ENCODE measurements at regions of chr2 and their contacts with region 1.

Region 1: GRCh38 chr2:64214281-64215115 is 70.3 kb upstream of the PELI1 start:
- DNase-seq: peak; percentile 59
- H3K4me3 Mint-ChIP-seq: peak overlapping the region; percentile 63
- H3K27ac Mint-ChIP-seq: peak overlapping the region; percentile 97
- H3K4me1 Mint-ChIP-seq: peaks cover 56% of the 10 kb centered on the region
- H3K27me3 Mint-ChIP-seq: no peaks in the 10 kb centered on the region

Region 2: GRCh38 chr2:63841254-63842022 is 373.1 kb before region 1 on chr2 and contains the start of gene UGP2:
- CTCF ChIA-PET with region 1: no interaction called
- POLR2A ChIA-PET with region 1: no interaction called
- intact Hi-C with region 1: loop called (anchors 2 kb)
- DNase-seq: peak; percentile 91
- H3K4me3 Mint-ChIP-seq: peak within 1 kb of the TSS; percentile 99
- H3K27ac Mint-ChIP-seq: peak within 1 kb of the TSS; percentile 100
- H3K4me1 Mint-ChIP-seq: peaks cover 44% of the 10 kb centered on the region
- H3K27me3 Mint-ChIP-seq: no peaks in the 10 kb centered on the region
- total RNA-seq, gene UGP2: 113 to 119 TPM

Region 3: DNA sequence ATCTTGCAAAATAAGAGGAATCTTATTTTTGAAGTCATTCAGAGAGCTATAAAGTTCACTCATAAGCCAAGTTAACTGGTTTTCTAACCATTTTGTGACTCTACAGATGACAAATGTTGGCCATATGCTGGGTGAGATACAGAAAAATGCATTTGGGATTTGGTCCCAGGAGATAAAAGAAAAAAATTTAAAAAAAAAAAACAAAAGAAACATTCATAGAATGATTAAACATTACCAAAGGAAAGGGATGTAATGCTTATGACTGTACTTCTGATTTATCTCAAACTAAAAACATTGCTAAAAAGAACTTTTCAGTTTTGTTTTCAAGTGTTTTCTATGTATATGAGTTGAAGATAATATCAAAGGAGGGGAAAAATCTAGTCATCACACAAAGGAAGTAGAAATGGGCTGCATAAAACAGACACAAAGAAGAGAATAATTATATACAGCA is 113.3 kb before region 1 on chr2:
- CTCF ChIA-PET with region 1: interaction called, 4 read pairs
- POLR2A ChIA-PET with region 1: interaction called, 13 read pairs
- intact Hi-C with region 1: loop called (anchors 1 kb)
- DNase-seq: no peak
- H3K4me3 Mint-ChIP-seq: peak overlapping the region; percentile 49
- H3K27ac Mint-ChIP-seq: peak overlapping the region; percentile 78
- H3K4me1 Mint-ChIP-seq: peaks cover 63% of the 10 kb centered on the region
- H3K27me3 Mint-ChIP-seq: no peaks in the 10 kb centered on the region

Region 4: DNA sequence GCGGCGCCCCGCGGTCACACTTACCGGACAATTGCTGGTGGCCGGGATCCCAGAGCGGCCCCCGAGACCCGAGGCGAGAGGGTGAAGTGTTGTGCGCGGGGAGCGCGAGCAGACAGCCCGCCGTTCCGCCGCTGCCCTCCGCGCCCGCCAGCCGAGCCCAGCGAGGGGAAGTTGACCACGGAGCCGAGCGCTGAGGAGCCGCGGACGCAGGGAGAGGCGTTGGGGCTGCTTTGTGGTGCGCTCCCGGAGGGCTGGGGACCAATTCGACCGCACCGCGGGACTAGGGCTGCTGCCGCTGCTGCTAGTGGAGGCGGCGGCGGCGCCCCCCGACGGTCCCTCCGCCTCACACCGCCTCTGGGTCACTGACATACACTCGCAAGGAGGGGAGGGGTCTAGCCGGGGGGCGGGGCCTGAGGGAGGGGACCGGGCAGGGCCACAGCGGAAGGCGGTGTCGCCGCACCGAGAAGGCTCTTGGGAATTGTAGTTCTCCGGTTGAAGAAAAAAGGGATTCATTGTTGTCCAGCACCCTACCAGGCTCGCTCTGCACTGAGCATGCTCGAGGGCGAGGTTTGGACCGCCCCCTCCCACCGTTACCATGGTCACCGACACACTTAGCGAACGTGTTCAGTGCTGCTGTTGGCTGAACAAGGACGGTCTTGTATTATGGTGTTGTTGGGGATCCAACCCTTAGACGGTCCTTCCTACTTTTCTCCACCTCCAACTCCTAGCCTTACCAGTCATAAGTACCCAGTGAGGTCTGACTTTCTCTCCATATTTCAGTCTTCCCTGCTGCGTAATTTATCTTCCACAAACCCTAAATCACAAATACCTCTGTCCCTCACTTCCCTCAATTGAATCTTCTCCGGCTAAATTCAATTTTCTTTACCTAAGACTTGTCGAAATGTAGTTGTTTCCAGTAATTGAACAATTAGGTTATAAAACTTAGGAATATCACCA is 70.2 kb before region 1 on chr2 and contains the start of gene PELI1:
- CTCF ChIA-PET with region 1: interaction called, 8 read pairs
- POLR2A ChIA-PET with region 1: interaction called, 32 read pairs
- intact Hi-C with region 1: loop called (anchors 1 kb)
- DNase-seq: peak; percentile 97
- H3K4me3 Mint-ChIP-seq: peak within 1 kb of the TSS; percentile 96
- H3K27ac Mint-ChIP-seq: peak within 1 kb of the TSS; percentile 97
- H3K4me1 Mint-ChIP-seq: peaks cover 24% of the 10 kb centered on the region
- H3K27me3 Mint-ChIP-seq: no peaks in the 10 kb centered on the region
- total RNA-seq, gene PELI1: 38.4 to 42.9 TPM

Region 5: GRCh38 chr2:64228126-64228678 is 13.7 kb after region 1 on chr2:
- CTCF ChIA-PET with region 1: interaction called, 5 read pairs
- POLR2A ChIA-PET with region 1: interaction called, 16 read pairs
- intact Hi-C with region 1: loop called (anchors 1 kb)
- DNase-seq: peak; percentile 76
- H3K4me3 Mint-ChIP-seq: peak overlapping the region; percentile 88
- H3K27ac Mint-ChIP-seq: peak overlapping the region; percentile 82
- H3K4me1 Mint-ChIP-seq: peaks cover 33% of the 10 kb centered on the region
- H3K27me3 Mint-ChIP-seq: peaks cover 2% of the 10 kb centered on the region

Region 6: DNA sequence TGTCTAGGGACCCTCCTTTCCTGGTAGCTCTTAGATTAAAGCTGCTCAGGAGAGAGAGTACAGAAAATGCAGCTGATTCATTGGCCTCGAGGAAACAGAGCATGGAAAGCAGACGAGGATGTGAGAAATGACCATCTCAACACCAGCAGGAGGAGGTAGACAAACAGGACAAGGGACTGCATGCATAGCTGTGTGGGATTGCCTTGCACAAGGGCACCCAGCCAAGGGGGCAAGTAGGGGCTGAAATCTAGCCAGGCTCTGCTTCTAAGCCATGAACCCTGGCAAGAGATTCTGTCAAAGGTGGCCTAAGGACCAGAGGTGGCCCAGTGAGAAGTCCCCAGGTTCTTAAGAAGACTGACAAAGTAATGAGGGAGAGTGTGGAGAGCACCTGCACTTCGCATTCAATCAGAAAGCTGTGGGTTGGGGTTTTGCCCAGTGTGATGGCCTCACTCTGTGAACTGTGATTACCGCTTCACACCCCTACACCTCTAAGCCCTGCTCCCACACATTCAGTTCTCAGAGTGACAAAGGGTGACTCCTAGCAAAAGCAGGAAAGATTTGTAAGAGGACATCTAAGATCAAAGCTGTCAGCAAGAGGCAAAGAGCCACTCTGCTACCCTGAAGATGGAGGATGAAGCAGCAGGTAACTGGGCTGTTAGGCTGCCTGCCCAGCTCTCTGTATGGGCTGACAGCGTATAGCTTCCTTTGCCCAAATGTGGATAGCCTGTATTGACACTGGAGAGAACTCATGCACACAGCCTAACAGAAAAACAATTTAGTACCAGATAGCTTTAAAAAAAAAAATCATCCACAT is 81.0 kb after region 1 on chr2:
- CTCF ChIA-PET with region 1: interaction called, 10 read pairs
- POLR2A ChIA-PET with region 1: interaction called, 29 read pairs
- intact Hi-C with region 1: loop called (anchors 1 kb)
- DNase-seq: peak; percentile 84
- H3K4me3 Mint-ChIP-seq: no peak overlapping the region
- H3K27ac Mint-ChIP-seq: peak overlapping the region; percentile 26
- H3K4me1 Mint-ChIP-seq: peaks cover 30% of the 10 kb centered on the region
- H3K27me3 Mint-ChIP-seq: peaks cover 2% of the 10 kb centered on the region

Measured in activated CD4-positive, alpha-beta memory T cell treated with anti-CD3 and anti-CD28 coated beads for 36 hours (primary cell).